ENCODE measurements at regions of chr1 and their contacts with region 1.

Region 1: GRCh38 chr1:66253330-66253921 is 280.5 kb upstream of the SGIP1 start:
- DNase-seq: peak; percentile 73
- ATAC-seq: peak; percentile 73
- H3K4me3 ChIP-seq: no peak overlapping the region
- H3K4me3 Mint-ChIP-seq: no peak overlapping the region
- H3K27ac ChIP-seq: no peak overlapping the region
- H3K27ac Mint-ChIP-seq: no peak overlapping the region
- H3K4me1 ChIP-seq: peaks cover 7 to 13% of the 10 kb centered on the region in 2 donors
- H3K4me1 Mint-ChIP-seq: peaks cover 22% of the 10 kb centered on the region
- H3K27me3 ChIP-seq: no peaks in the 10 kb centered on the region
- H3K27me3 Mint-ChIP-seq: no peaks in the 10 kb centered on the region
- CTCF ChIP-seq: peak; percentile 83

Region 2: DNA sequence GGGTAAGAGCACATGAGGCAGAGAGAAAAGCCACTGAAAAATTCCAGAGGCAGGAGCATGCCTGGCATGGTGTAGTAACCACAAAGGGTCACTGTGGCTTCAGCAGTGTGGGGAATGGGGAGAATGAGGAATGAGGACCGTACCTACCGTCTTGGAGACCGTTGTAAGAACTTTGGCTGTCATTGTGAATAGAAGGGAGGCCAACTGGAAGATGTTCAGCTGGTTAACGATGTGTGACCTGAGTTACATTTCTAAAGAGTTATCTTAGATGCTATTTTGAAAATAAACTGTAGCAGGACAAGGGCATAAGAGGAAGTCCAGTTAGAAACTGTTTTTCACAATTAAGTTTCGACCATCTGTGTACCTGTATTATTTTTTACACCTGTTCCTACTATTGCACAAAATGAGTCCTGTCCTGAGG is 84.9 kb before region 1 on chr1:
- CTCF ChIA-PET with region 1: no interaction called
- POLR2A ChIA-PET with region 1: no interaction called
- intact Hi-C with region 1: no loop called
- DNase-seq: no peak
- ATAC-seq: no peak
- H3K4me3 ChIP-seq: no peak overlapping the region
- H3K4me3 Mint-ChIP-seq: no peak overlapping the region
- H3K27ac ChIP-seq: no peak overlapping the region
- H3K27ac Mint-ChIP-seq: no peak overlapping the region
- H3K4me1 ChIP-seq: no peaks in the 10 kb centered on the region
- H3K4me1 Mint-ChIP-seq: no peaks in the 10 kb centered on the region
- H3K27me3 ChIP-seq: no peaks in the 10 kb centered on the region
- H3K27me3 Mint-ChIP-seq: peaks cover 9% of the 10 kb centered on the region
- CTCF ChIP-seq: no peak

Region 3: GRCh38 chr1:66242646-66243547 is 10.5 kb before region 1 on chr1:
- CTCF ChIA-PET with region 1: interaction called, 108 read pairs
- POLR2A ChIA-PET with region 1: no interaction called
- intact Hi-C with region 1: no loop called
- DNase-seq: peak; percentile 75
- ATAC-seq: peak; percentile 94
- H3K4me3 ChIP-seq: no peak overlapping the region
- H3K4me3 Mint-ChIP-seq: no peak overlapping the region
- H3K27ac ChIP-seq: no peak overlapping the region
- H3K27ac Mint-ChIP-seq: no peak overlapping the region
- H3K4me1 ChIP-seq: no peaks in the 10 kb centered on the region
- H3K4me1 Mint-ChIP-seq: peaks cover 7% of the 10 kb centered on the region
- H3K27me3 ChIP-seq: peaks cover 0 to 3% (median 0%) of the 10 kb centered on the region in 4 experiments
- H3K27me3 Mint-ChIP-seq: peaks cover 17% of the 10 kb centered on the region
- CTCF ChIP-seq: peak; percentile 97

Region 4: GRCh38 chr1:66339944-66340343 is 86.5 kb after region 1 on chr1:
- CTCF ChIA-PET with region 1: interaction called, 18 read pairs
- POLR2A ChIA-PET with region 1: interaction called, 5 read pairs
- intact Hi-C with region 1: loop called (anchors 1 kb)
- DNase-seq: peak; percentile 50
- ATAC-seq: no peak
- H3K4me3 ChIP-seq: peak overlapping the region in 3 of 5 experiments; percentile 22 to 27 (median 27)
- H3K4me3 Mint-ChIP-seq: peak overlapping the region; percentile 82
- H3K27ac ChIP-seq: peak overlapping the region; percentile 53 to 94
- H3K27ac Mint-ChIP-seq: peak overlapping the region; percentile 67
- H3K4me1 ChIP-seq: peaks cover 77 to 78% of the 10 kb centered on the region in 2 donors
- H3K4me1 Mint-ChIP-seq: peaks cover 77% of the 10 kb centered on the region
- H3K27me3 ChIP-seq: no peaks in the 10 kb centered on the region
- H3K27me3 Mint-ChIP-seq: no peaks in the 10 kb centered on the region
- CTCF ChIP-seq: no peak

Region 5: DNA sequence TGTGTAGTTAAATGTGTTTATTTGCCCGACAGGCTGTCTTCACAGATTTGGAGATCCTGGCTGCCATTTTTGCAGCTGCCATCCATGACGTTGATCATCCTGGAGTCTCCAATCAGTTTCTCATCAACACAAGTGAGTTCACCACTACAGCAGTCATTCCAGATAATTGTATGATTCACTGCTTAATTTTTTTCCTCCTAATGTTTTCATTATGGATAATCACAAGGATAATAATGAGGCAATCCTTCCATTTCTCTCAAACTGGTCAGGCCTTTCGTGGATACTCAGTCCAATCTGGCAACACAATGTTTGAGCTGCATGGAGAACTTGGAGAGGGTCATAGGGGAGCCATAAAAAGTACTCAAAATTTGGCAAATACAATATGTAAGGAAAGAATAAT is 112.2 kb after region 1 on chr1:
- CTCF ChIA-PET with region 1: interaction called, 12 read pairs
- POLR2A ChIA-PET with region 1: no interaction called
- intact Hi-C with region 1: loop called (anchors 1 kb)
- DNase-seq: no peak
- ATAC-seq: no peak
- H3K4me3 ChIP-seq: no peak overlapping the region
- H3K4me3 Mint-ChIP-seq: no peak overlapping the region
- H3K27ac ChIP-seq: peak overlapping the region in 1 of 2 donors; percentile 81
- H3K27ac Mint-ChIP-seq: peak overlapping the region; percentile 57
- H3K4me1 ChIP-seq: peaks cover 33 to 34% of the 10 kb centered on the region in 2 donors
- H3K4me1 Mint-ChIP-seq: peaks cover 80% of the 10 kb centered on the region
- H3K27me3 ChIP-seq: no peaks in the 10 kb centered on the region
- H3K27me3 Mint-ChIP-seq: no peaks in the 10 kb centered on the region
- CTCF ChIP-seq: no peak

Region 6: GRCh38 chr1:66452162-66452561 is 198.7 kb after region 1 on chr1:
- CTCF ChIA-PET with region 1: interaction called, 572 read pairs
- POLR2A ChIA-PET with region 1: no interaction called
- intact Hi-C with region 1: no loop called
- DNase-seq: no peak
- ATAC-seq: no peak
- H3K4me3 ChIP-seq: no peak overlapping the region
- H3K4me3 Mint-ChIP-seq: no peak overlapping the region
- H3K27ac ChIP-seq: no peak overlapping the region
- H3K27ac Mint-ChIP-seq: no peak overlapping the region
- H3K4me1 ChIP-seq: no peaks in the 10 kb centered on the region
- H3K4me1 Mint-ChIP-seq: no peaks in the 10 kb centered on the region
- H3K27me3 ChIP-seq: no peaks in the 10 kb centered on the region
- H3K27me3 Mint-ChIP-seq: no peaks in the 10 kb centered on the region
- CTCF ChIP-seq: no peak

Measured in B cell (primary cell).